Activated CD4-positive, alpha-beta memory T cell treated with anti-CD3 and anti-CD28 coated beads, Interleukin-2, amount 10 ng/mL, durations not matched to agents 7 days and 5 days (primary cell): ENCODE measurements at regions of chr9 and their contacts with region 1.

Region 1: GRCh38 chr9:36407122-36407723 is 7.2 kb upstream of the RNF38 start:
- DNase-seq: peak; percentile 60
- H3K4me3 Mint-ChIP-seq: no peak overlapping the region
- H3K27ac Mint-ChIP-seq: peak overlapping the region; percentile 27
- H3K4me1 Mint-ChIP-seq: peaks cover 6% of the 10 kb centered on the region
- H3K27me3 Mint-ChIP-seq: no peaks in the 10 kb centered on the region

Region 2: GRCh38 chr9:36190388-36191287 is 216.6 kb before region 1 on chr9 and contains the start of gene CLTA:
- CTCF ChIA-PET with region 1: no interaction called
- POLR2A ChIA-PET with region 1: no interaction called
- DNase-seq: peak; percentile 96
- H3K4me3 Mint-ChIP-seq: peak within 1 kb of the TSS; percentile 82
- H3K27ac Mint-ChIP-seq: peak within 1 kb of the TSS; percentile 77
- H3K4me1 Mint-ChIP-seq: peaks cover 66% of the 10 kb centered on the region
- H3K27me3 Mint-ChIP-seq: peaks cover 7% of the 10 kb centered on the region
- total RNA-seq, gene CLTA: 150 to 151 TPM

Region 3: DNA sequence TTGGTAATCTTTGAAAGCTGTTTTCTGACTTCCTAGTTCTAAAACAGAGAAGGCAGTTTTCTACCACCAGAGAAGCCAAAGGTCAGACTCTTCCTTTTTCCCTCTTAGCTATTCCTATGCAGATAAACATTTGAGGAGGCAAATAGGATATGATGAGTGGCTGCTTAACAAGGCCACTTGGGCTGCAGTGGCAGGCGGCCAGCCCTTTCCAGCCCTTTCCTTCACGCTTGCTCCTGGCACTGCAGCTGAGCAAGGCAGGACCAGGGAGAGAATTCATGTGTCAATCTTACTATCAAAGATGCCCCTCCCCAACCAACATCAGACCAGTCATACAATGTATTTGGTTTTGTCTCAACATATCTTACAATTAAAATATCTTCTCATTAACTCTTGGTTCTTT is 29.7 kb after region 1 on chr9:
- CTCF ChIA-PET with region 1: interaction called, 19 read pairs
- POLR2A ChIA-PET with region 1: no interaction called
- DNase-seq: no peak
- H3K4me3 Mint-ChIP-seq: no peak overlapping the region
- H3K27ac Mint-ChIP-seq: no peak overlapping the region
- H3K4me1 Mint-ChIP-seq: peaks cover 10% of the 10 kb centered on the region
- H3K27me3 Mint-ChIP-seq: no peaks in the 10 kb centered on the region

Region 4: GRCh38 chr9:36450110-36450732 is 43.0 kb after region 1 on chr9:
- CTCF ChIA-PET with region 1: interaction called, 54 read pairs
- POLR2A ChIA-PET with region 1: interaction called, 4 read pairs
- DNase-seq: no peak
- H3K4me3 Mint-ChIP-seq: no peak overlapping the region
- H3K27ac Mint-ChIP-seq: no peak overlapping the region
- H3K4me1 Mint-ChIP-seq: peaks cover 3% of the 10 kb centered on the region
- H3K27me3 Mint-ChIP-seq: no peaks in the 10 kb centered on the region

Region 5: DNA sequence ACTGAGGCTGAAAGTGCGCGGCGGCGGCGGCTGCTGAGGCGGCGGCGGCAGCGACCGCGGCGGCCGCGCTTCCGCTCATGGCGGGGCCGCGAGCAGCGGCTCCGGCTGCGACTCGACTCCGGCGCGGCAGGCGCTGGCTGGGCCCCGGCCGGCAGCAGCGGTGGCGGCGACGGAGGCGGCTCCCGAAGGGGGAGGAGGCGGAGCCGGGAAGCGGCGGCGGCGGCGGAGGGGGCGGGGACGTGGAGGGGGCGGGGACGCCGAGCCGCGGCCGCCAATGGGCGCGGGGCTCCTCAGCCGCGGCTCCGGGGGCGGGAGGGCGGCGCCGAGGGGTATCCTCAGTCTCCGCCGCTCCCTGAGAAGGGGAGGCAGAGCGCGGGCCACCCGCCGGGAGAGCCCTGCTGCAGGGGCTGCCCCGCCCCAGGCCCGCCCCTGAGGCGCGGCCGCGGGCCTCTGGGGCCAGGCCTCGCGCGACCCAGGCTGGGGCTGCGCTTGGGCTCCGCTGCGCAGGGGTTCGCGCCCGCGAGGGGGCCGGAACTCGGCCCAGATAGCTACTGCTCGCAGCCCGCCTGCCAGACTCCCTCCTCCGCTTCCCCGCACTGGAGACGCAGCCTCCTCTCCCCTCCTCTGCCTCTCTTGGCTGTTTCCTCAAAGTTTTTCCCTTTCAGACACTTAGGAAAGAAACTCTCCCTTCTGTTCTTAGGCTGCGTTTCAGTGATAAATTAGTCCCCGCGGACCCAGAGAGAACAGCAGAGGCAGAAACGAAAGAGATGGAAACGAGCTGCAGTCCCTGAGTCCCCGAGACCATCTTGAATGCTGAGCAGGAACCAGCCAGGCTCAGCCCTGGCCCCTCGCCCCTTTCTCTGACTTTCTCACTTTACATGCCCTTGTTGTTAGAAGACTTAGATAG is 80.5 kb after region 1 on chr9:
- CTCF ChIA-PET with region 1: interaction called, 10 read pairs
- POLR2A ChIA-PET with region 1: interaction called, 6 read pairs
- DNase-seq: peak; percentile 92
- H3K4me3 Mint-ChIP-seq: peak overlapping the region; percentile 85
- H3K27ac Mint-ChIP-seq: peak overlapping the region; percentile 98
- H3K4me1 Mint-ChIP-seq: peaks cover 51% of the 10 kb centered on the region
- H3K27me3 Mint-ChIP-seq: no peaks in the 10 kb centered on the region

Region 6: GRCh38 chr9:36560857-36561221 is 153.6 kb after region 1 on chr9:
- CTCF ChIA-PET with region 1: interaction called, 193 read pairs
- POLR2A ChIA-PET with region 1: interaction called, 11 read pairs
- DNase-seq: no peak
- H3K4me3 Mint-ChIP-seq: no peak overlapping the region
- H3K27ac Mint-ChIP-seq: no peak overlapping the region
- H3K4me1 Mint-ChIP-seq: peaks cover under 1% of the 10 kb centered on the region
- H3K27me3 Mint-ChIP-seq: peaks cover 2% of the 10 kb centered on the region

Region 7: GRCh38 chr9:36717276-36717675 is 310.1 kb after region 1 on chr9:
- CTCF ChIA-PET with region 1: no interaction called
- POLR2A ChIA-PET with region 1: no interaction called
- DNase-seq: no peak
- H3K4me3 Mint-ChIP-seq: no peak overlapping the region
- H3K27ac Mint-ChIP-seq: no peak overlapping the region
- H3K4me1 Mint-ChIP-seq: no peaks in the 10 kb centered on the region
- H3K27me3 Mint-ChIP-seq: peaks cover 2% of the 10 kb centered on the region

Region 8: DNA sequence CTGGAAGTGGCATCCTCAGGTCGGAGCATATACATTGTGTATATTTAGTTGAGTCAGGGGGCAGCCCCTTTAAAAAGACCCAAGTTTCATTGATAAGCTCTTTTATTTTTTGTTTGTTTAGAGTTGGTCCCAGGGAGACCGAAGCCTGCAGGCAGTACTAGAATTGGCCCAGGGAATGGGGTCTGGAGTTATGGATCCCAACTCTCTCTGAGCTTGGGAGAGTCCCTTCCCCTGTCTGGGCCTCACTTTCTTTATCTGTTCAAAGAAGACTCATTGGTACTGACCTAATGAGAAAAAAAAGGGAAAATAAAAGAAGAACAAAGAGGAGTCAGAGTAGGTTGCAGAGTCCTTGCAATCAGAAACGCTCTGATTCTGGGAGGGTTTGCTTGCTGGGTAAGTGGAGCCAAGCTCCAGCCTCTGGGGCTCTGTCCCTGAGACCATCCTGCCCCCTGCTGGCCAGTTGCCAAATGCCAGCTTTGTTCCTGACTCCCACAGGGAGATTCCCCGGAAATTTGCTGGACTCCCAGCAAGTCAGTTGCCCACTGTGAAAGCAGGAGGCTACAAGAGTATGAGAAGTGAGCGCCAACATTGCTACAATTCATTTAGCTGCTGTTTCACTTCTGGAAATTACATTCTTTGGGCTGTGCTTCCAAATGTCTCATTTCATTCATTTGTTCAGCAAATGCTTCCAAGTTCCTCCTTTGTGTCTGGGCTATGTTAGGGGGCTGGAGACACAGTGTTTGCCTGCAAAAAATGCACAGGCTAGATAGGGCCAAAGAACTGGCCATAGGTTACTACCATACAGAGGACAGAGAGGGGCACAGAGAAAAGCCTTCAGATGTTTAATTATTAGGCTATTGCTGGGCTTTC is 321.7 kb after region 1 on chr9:
- CTCF ChIA-PET with region 1: interaction called, 12 read pairs
- POLR2A ChIA-PET with region 1: no interaction called
- DNase-seq: peak; percentile 66
- H3K4me3 Mint-ChIP-seq: no peak overlapping the region
- H3K27ac Mint-ChIP-seq: no peak overlapping the region
- H3K4me1 Mint-ChIP-seq: peaks cover 4% of the 10 kb centered on the region
- H3K27me3 Mint-ChIP-seq: no peaks in the 10 kb centered on the region